Heart right ventricle (tissue), 16 donors: ENCODE measurements at regions of chr1 and their contacts with region 1.

Region 1: DNA sequence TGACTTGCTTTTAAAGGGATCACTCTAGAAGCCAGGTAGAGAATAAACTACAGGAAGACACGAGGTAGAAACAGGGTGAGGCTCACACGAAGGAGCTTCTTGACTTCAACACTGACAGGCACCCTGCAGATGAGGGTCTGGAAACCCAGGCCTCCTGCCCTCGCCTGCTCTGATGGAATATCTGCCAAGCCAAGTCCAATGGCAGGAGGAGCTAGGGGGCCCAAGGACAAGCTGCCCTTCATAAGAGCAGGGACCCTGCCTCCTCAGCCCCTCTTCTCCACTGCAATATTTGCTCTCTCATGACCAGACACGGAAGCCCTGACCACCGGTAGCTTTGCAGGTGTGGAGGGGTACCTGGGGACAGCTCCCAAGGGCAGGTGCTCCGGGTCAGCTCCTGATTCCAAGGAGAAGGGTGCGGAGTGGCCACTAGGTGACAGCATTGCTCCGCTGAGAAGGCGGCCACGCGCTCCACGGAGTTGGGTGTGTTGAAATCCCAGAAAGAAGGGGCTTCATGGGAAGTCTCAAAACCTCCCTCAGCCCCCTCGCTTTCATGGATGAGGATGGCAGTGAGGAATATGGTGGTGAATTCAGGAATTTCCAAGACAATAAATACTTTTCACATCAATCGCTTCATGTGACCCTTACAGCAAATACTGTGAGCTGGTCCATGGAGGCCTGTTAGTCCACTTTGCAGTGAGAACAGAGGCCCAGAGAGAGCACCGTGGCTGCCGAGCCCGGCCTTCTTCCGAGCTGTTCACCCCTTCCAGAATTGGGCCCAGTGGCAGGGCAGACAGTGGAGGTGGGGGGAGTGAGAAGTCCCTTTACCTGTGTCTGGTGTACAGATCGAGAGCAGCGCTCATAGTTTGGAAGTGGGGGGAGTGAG is 33.2 kb upstream of the PAX7 start:
- DNase-seq: peak; percentile 32 to 55
- ATAC-seq: peak in 7 of 8 donors; percentile 65 to 84 (median 76)
- H3K4me3 ChIP-seq: no peak overlapping the region
- H3K27ac ChIP-seq: no peak overlapping the region
- H3K4me1 ChIP-seq: no peaks in the 10 kb centered on the region
- H3K27me3 ChIP-seq: peaks cover 7 to 86% (median 61%) of the 10 kb centered on the region in 7 donors
- CTCF ChIP-seq: peak; percentile 90 to 95 (median 91)

Region 2: GRCh38 chr1:18413541-18414305 is 183.7 kb before region 1 on chr1:
- intact Hi-C with region 1: no loop called
- DNase-seq: no peak
- ATAC-seq: no peak
- H3K4me3 ChIP-seq: no peak overlapping the region
- H3K27ac ChIP-seq: no peak overlapping the region
- H3K4me1 ChIP-seq: no peaks in the 10 kb centered on the region
- H3K27me3 ChIP-seq: peaks cover 0 to 24% (median 8%) of the 10 kb centered on the region in 7 donors
- CTCF ChIP-seq: no peak

Region 3: DNA sequence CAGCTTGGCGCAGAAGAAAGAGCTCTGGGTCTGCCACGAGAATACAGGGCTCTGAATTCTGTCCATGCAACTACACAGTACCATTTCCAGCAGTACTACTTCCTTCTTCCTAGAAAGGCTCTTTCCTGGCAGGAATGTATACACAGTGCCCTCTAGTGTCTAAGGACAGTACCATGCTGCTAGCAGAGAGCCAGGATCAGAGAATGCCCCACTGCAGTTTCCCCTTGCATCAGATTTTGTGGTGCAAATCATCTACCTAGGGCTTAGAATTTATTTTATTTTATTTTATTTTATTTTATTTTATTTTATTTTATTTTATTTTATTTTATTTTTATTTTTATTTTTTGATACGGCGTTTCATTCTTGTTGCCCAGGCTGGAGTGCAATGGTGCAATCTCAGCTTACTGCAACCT is 84.0 kb after region 1 on chr1:
- intact Hi-C with region 1: loop called in 1 of 10 experiments (anchors 5 kb)
- DNase-seq: no peak
- ATAC-seq: no peak
- H3K4me3 ChIP-seq: no peak overlapping the region
- H3K27ac ChIP-seq: no peak overlapping the region
- H3K4me1 ChIP-seq: no peaks in the 10 kb centered on the region
- H3K27me3 ChIP-seq: peaks cover 0 to 85% (median 81%) of the 10 kb centered on the region in 7 donors
- CTCF ChIP-seq: peak in 8 of 9 donors; percentile 9 to 60 (median 41)

Region 4: DNA sequence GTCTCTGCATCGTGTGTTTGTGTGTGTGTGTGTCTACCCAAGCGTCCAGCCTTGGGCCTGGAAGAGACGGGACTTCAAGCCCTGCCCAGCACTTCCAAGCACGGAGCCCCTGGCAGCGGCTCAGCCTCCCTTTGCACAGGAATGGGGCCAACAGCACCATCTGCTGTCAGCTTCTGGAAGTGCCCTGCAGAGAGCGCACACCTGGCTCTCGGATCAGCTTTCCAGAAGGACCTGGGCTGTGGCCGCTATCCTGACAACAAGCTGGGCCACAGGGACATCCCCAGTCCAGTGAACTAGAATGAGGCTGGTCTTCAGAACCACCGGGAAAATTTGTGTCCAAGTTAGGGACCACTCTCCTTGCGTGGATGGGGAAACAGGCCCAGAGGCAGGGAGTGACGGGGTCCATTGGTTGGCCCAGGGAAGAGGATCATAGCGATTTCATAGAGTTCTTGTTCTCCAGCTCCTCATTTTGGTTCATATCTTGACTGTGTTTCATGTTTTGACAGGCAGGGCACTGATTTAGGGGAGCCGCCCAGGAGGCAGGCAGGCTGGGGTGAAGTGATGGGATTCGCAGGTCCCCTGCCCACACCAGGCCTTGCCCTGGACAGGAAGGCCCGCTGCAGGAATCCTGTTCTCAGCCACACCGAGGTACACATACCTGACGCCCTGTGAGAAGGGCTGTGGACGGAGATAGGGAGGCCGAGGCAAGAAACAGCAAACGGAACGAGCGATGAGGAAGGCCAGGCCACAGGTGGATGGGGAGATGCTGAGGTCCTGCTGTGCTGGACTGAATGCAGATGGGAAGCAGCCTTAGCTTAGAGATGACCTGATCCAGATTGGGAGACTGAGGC is 223.6 kb after region 1 on chr1:
- intact Hi-C with region 1: loop called (anchors 1 to 5 kb)
- DNase-seq: peak; percentile 48 to 75
- ATAC-seq: peak; percentile 73 to 85 (median 81)
- H3K4me3 ChIP-seq: peak overlapping the region in 1 of 10 donors; percentile 3
- H3K27ac ChIP-seq: no peak overlapping the region
- H3K4me1 ChIP-seq: no peaks in the 10 kb centered on the region
- H3K27me3 ChIP-seq: peaks cover 0 to 61% (median 49%) of the 10 kb centered on the region in 7 donors
- CTCF ChIP-seq: peak; percentile 63 to 94 (median 86)

Region 5: DNA sequence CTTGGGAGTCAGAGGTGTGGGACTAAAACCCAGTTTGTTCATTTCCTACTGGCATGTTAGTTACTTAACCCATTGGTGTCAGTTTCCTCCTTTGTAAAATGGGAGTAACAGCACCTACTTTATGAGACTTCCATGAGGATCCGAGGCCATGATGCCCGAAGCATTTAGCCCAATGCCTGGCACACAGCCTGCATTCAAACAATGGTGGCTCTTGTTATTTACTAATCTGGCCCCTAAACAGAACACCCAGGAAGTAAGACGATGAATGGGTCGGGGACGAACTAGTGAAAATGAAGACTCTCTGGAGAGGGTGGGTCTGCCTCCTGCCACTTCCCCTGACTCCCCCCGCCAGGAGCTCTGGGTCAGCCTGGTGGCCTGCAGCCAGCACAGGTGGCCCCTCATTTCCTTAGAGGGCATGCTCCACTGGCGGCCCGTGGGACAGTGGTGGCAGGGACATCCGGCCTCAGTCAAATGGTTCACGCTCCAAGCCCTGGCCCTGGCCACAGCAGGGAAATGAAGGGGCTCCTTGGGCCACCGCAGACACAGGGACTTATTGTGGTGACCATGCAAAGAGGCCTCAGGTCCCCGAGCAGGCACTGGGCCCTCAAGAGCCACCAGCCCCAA is 271.5 kb after region 1 on chr1:
- intact Hi-C with region 1: loop called in 8 of 10 experiments (anchors 2 to 5 kb)
- DNase-seq: no peak
- ATAC-seq: no peak
- H3K4me3 ChIP-seq: no peak overlapping the region
- H3K27ac ChIP-seq: no peak overlapping the region
- H3K4me1 ChIP-seq: no peaks in the 10 kb centered on the region
- H3K27me3 ChIP-seq: peaks cover 0 to 26% (median 4%) of the 10 kb centered on the region in 7 donors
- CTCF ChIP-seq: no peak

Region 6: GRCh38 chr1:18875107-18875795 is 277.9 kb after region 1 on chr1:
- intact Hi-C with region 1: loop called in 9 of 10 experiments (anchors 2 to 5 kb)
- DNase-seq: peak; percentile 77 to 79
- ATAC-seq: peak; percentile 47 to 84 (median 77)
- H3K4me3 ChIP-seq: no peak overlapping the region
- H3K27ac ChIP-seq: no peak overlapping the region
- H3K4me1 ChIP-seq: peaks cover 0 to 11% (median 6%) of the 10 kb centered on the region in 9 donors
- H3K27me3 ChIP-seq: no peaks in the 10 kb centered on the region
- CTCF ChIP-seq: peak; percentile 55 to 87 (median 86)

Region 7: DNA sequence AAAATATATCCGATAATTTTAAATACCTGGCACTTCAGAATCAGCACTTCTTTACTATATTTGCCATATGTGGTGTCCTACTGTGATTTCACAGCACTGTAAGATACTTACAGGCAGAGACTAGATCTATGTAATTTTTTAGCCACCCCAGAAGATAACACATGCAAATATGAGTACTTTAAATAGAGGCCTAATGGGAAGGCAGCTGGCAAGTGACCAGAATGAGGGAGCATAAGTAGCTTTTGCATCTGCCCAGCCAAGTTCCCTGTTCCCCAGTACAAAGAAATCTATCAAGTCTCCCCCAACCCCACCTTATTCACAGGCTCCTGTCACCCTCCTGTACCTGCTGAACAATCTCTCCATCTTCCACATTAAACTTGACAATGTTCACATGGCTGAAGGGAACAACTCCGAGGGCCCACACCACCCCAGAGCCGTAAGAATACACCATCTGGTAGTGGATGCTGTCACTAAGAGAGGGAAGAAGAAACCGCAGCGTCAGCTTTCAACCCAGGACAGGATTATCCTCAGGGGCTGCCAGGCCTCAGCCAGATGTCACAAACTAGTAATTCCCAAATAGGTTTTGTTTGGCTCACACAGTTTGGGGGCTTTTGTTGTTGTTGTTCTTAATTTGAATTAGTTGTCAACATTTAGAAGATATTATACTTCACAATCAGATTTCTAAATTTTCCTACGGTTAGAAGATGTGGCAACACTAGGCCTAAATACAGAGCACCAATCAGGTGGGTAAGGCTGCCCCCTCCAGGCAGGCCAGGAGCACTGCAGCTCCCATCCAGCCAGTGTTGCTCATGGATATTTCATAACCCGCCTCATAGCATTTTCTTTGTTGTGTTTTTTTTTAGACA is 643.5 kb after region 1 on chr1:
- intact Hi-C with region 1: loop called in 1 of 10 experiments (anchors 2 kb)
- DNase-seq: peak; percentile 33 to 51
- ATAC-seq: peak; percentile 80 to 94 (median 91)
- H3K4me3 ChIP-seq: no peak overlapping the region
- H3K27ac ChIP-seq: peak overlapping the region in 2 of 10 donors; percentile 47 to 48
- H3K4me1 ChIP-seq: peaks cover 0 to 15% (median 0%) of the 10 kb centered on the region in 9 donors
- H3K27me3 ChIP-seq: no peaks in the 10 kb centered on the region
- CTCF ChIP-seq: peak; percentile 85 to 98 (median 96)